Left ventricle myocardium inferior (tissue), 1 donor: ENCODE measurements at regions of chr5 and their contacts with region 1.

Region 1: GRCh38 chr5:80308526-80308925 is 11.3 kb upstream of the SPZ1 start:
- DNase-seq: no peak
- H3K4me3 ChIP-seq: no peak overlapping the region
- H3K27ac ChIP-seq: no peak overlapping the region
- H3K4me1 ChIP-seq: no peaks in the 10 kb centered on the region
- H3K27me3 ChIP-seq: no peaks in the 10 kb centered on the region
- CTCF ChIP-seq: no peak

Region 2: DNA sequence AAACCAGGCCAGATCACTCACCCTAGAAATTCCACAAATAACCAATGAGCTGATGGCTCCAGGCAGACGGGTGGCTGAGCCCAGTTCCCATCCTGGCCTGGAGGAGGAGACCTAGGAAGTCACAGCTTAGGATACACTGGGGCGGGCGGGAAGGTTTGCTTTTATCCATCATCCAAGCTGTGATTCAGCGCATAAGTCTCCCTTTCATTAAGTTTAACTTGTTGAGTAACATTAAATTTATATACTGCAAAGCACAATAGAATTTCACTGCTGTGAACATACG is 217.7 kb before region 1 on chr5:
- intact Hi-C with region 1: loop called (anchors 2 kb)
- DNase-seq: no peak
- H3K4me3 ChIP-seq: no peak overlapping the region
- H3K27ac ChIP-seq: no peak overlapping the region
- H3K4me1 ChIP-seq: peaks cover 9% of the 10 kb centered on the region
- H3K27me3 ChIP-seq: no peaks in the 10 kb centered on the region
- CTCF ChIP-seq: no peak